RWPE1 (cell line): ENCODE measurements at regions of chr17 and their contacts with region 1.

Region 1: DNA sequence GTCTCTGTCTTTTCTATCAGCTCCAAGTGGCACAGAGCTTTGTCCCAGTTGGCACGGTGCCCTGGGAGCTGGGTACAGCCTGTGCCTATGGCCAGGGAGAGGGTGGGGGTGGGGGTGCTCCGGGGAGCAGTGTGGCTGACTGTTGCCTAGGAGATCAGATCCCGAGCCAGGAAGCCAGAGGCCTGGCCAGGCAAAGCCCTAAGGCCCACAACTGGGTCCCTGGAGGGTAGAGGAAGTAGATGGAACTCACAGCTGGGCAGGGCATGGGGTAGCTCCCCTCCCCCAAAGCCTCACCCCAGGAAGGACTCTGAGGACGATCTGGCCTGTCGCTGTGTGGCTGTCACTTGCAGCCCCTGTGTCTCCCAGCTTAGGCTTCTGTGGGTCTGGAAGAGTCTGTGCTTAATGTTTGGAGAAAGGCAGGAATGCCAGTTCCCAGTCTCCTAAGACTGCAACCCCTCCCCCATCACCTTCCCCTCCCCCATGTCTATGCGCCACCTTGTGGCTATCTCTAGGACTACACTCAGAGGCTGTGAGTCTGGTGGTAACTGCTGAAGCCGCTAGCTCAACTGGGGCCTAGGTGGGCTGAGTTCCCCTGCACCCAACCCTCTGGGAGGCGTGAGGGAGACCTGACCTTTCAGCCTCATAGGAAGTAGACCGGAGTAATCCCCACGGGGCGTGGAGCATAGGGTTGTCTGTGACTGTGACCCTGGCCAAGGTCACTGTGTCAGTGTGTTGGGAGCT is 12.6 kb downstream of the THRA start:
- DNase-seq: no peak
- H3K27ac ChIP-seq: peak overlapping the region; percentile 95
- CTCF ChIP-seq: peak; percentile 84

Region 2: GRCh38 chr17:40026816-40027613 is 48.4 kb before region 1 on chr17:
- CTCF ChIA-PET with region 1: interaction called, 18 read pairs
- POLR2A ChIA-PET with region 1: interaction called, 4 read pairs
- DNase-seq: peak; percentile 86
- H3K27ac ChIP-seq: peak overlapping the region; percentile 99
- CTCF ChIP-seq: peak; percentile 88

Region 3: GRCh38 chr17:40062329-40063186 is 12.8 kb before region 1 on chr17 and contains the start of gene THRA:
- CTCF ChIA-PET with region 1: interaction called, 22 read pairs
- POLR2A ChIA-PET with region 1: no interaction called
- DNase-seq: peak; percentile 72
- H3K27ac ChIP-seq: peak within 1 kb of the TSS; percentile 95
- CTCF ChIP-seq: peak; percentile 73

Region 4: DNA sequence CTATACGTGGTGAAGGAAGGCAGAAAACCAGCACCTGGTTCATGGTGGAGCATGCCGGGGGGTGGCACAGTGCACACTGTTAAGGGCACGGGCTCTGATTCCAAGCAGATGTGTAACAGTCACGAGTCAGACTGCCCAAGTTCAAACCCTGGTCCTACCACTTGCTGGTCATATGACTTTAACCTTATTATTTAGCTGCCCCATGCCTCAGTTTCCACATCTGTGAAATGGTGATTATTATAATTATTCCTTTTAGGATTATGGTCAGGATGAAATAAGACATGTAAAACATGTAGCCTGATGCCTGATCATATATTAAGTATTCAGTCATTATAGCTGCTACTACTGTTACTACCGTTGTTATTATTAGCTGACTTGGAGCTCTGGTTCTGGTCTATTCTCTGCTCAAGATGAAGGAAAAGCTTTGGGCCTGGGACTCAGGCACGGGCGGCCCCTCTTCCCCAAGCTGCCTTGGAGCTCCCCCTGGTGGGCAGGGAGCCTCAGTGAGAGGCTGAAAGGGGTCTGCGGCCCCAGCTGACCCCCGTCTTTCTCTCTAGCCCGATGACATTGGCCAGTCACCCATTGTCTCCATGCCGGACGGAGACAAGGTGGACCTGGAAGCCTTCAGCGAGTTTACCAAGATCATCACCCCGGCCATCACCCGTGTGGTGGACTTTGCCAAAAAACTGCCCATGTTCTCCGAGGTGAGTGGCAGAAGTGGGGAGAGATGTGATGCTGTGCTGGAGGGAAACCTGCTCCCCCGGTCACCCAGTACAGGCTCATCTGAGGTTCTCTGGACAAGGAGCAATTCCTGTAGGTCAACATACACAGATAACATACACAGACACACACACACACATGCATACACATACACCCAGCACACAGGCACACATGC is 11.0 kb after region 1 on chr17:
- CTCF ChIA-PET with region 1: interaction called, 38 read pairs
- POLR2A ChIA-PET with region 1: no interaction called
- DNase-seq: no peak
- H3K27ac ChIP-seq: peak overlapping the region; percentile 60
- CTCF ChIP-seq: peak; percentile 80